Activated CD4-positive, alpha-beta memory T cell treated with anti-CD3 and anti-CD28 coated beads, Interleukin-2, amount 10 ng/mL, durations not matched to agents 7 days and 5 days (primary cell): ENCODE measurements at regions of chr14 and their contacts with region 1.

Region 1: DNA sequence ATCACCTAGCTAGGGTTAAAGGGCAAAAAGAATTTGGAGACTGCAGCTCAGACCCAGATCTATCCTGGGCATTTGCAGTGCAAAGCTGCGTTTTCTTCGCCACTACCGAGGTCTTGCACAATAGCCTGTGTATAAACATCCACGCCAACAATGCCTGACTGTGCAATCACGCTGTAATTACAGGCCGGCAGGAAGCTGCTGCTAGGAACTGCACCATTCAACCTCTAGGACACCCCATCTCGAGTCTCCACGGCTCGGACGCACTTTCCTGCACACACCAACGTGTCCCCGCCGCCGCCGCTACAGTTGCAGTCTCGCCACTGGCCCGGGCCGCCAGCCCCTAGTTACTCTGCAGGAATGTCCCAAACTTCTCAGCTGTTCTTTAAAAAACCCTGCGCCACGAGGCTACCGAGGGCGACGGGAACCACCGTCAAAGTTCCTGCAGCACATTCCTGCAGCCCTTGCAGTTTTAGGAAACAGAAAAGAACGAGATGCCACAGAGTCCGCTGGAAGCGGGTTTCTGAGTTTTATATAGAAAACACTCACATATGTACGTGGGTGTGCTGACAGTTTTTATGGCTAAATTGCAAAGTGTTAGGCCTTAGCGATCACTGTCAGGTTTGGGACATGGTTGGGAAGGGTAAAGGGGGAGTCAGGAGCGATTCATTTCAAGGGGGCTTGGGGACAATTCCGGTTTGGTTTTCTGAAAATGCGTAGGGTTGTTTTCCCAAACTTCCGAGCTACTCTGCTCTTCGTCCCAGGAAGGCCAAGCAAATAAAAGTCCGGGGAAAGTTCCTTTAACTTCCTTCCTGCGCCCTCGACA is 65.5 kb upstream of the PTGR2 start:
- DNase-seq: peak; percentile 78
- H3K4me3 Mint-ChIP-seq: peak overlapping the region; percentile 80
- H3K27ac Mint-ChIP-seq: peak overlapping the region; percentile 94
- H3K4me1 Mint-ChIP-seq: peaks cover 57% of the 10 kb centered on the region
- H3K27me3 Mint-ChIP-seq: no peaks in the 10 kb centered on the region

Region 2: GRCh38 chr14:73568381-73568781 is 217.7 kb before region 1 on chr14:
- CTCF ChIA-PET with region 1: no interaction called
- POLR2A ChIA-PET with region 1: interaction called, 11 read pairs
- DNase-seq: no peak
- H3K4me3 Mint-ChIP-seq: peak overlapping the region; percentile 85
- H3K27ac Mint-ChIP-seq: peak overlapping the region; percentile 91
- H3K4me1 Mint-ChIP-seq: peaks cover 41% of the 10 kb centered on the region
- H3K27me3 Mint-ChIP-seq: no peaks in the 10 kb centered on the region

Region 3: DNA sequence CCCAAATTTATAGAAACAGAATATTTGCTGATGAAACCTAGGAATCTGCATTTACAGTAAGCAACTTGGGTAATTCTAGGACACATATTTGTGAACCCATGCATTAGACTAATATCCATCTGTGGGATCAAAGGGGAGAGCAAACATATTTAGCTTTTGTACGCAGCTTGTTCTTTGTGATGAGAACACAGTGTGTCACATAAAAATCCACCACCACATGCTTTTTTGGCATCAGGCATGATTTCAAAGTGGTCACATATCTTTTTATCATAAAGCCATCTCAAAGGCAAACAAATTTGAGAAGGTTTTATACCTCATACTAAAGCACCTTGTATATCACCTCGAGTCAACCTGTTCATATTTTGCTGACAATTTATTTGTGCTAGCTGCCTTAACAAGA is 125.6 kb before region 1 on chr14:
- CTCF ChIA-PET with region 1: no interaction called
- POLR2A ChIA-PET with region 1: no interaction called
- DNase-seq: no peak
- H3K4me3 Mint-ChIP-seq: no peak overlapping the region
- H3K27ac Mint-ChIP-seq: no peak overlapping the region
- H3K4me1 Mint-ChIP-seq: no peaks in the 10 kb centered on the region
- H3K27me3 Mint-ChIP-seq: no peaks in the 10 kb centered on the region

Region 4: GRCh38 chr14:73695997-73696396 is 90.1 kb before region 1 on chr14:
- CTCF ChIA-PET with region 1: no interaction called
- POLR2A ChIA-PET with region 1: no interaction called
- DNase-seq: no peak
- H3K4me3 Mint-ChIP-seq: no peak overlapping the region
- H3K27ac Mint-ChIP-seq: peak overlapping the region; percentile 69
- H3K4me1 Mint-ChIP-seq: peaks cover 36% of the 10 kb centered on the region
- H3K27me3 Mint-ChIP-seq: no peaks in the 10 kb centered on the region

Region 5: GRCh38 chr14:73728717-73729330 is 57.3 kb before region 1 on chr14:
- CTCF ChIA-PET with region 1: interaction called, 17 read pairs
- POLR2A ChIA-PET with region 1: interaction called, 4 read pairs
- DNase-seq: peak; percentile 88
- H3K4me3 Mint-ChIP-seq: no peak overlapping the region
- H3K27ac Mint-ChIP-seq: peak overlapping the region; percentile 62
- H3K4me1 Mint-ChIP-seq: peaks cover 43% of the 10 kb centered on the region
- H3K27me3 Mint-ChIP-seq: no peaks in the 10 kb centered on the region

Region 6: GRCh38 chr14:73746520-73747378 is 39.3 kb before region 1 on chr14:
- CTCF ChIA-PET with region 1: interaction called, 16 read pairs
- POLR2A ChIA-PET with region 1: interaction called, 79 read pairs
- DNase-seq: no peak
- H3K4me3 Mint-ChIP-seq: no peak overlapping the region
- H3K27ac Mint-ChIP-seq: peak overlapping the region; percentile 75
- H3K4me1 Mint-ChIP-seq: peaks cover 99% of the 10 kb centered on the region
- H3K27me3 Mint-ChIP-seq: no peaks in the 10 kb centered on the region

Region 7: DNA sequence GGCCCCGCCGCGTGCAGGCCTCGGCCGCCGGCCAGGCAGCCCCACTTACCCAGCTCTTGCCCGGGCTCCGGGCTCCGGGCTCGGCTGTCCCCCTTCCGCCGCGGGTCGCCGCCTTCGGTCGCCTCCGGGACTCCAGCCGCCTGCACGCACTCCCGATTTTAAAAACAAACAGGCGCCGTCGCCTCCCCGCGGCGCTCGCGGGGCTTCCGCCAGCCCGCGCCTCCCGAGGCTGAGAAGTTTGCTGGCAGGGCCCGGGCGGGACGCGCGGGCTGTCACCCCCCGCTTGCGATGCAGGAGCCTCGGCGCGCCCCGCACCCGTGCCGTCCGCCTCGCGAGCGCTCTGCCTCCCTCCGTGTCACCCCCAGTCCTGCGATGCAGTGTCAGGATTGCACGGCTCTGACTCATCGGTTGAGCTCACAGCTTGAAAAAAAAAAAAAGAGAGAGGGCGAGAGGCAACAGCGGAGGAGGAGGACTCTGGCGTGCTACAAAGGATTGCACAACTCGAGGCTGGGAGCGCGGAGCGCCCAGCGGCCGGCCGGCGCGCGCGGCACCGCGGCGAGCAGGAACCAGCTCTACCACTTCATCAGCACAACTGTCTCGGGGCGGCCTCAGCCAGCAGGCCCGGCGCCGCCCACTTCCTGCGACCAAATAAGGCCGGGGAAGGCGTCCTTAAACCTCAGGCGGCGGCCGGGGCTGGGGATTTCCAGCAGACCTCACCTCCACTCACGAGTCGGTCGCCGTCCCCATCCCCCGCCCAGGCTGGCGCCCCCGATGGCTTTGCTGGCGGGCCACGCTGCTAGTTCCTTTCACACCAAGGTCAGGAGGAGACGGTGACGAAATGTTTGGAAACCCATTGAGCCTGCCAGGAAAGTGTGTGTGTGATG is 26.1 kb before region 1 on chr14:
- CTCF ChIA-PET with region 1: interaction called, 76 read pairs
- POLR2A ChIA-PET with region 1: interaction called, 236 read pairs
- DNase-seq: peak; percentile 96
- H3K4me3 Mint-ChIP-seq: peak overlapping the region; percentile 87
- H3K27ac Mint-ChIP-seq: peak overlapping the region; percentile 92
- H3K4me1 Mint-ChIP-seq: peaks cover 79% of the 10 kb centered on the region
- H3K27me3 Mint-ChIP-seq: no peaks in the 10 kb centered on the region

Region 8: DNA sequence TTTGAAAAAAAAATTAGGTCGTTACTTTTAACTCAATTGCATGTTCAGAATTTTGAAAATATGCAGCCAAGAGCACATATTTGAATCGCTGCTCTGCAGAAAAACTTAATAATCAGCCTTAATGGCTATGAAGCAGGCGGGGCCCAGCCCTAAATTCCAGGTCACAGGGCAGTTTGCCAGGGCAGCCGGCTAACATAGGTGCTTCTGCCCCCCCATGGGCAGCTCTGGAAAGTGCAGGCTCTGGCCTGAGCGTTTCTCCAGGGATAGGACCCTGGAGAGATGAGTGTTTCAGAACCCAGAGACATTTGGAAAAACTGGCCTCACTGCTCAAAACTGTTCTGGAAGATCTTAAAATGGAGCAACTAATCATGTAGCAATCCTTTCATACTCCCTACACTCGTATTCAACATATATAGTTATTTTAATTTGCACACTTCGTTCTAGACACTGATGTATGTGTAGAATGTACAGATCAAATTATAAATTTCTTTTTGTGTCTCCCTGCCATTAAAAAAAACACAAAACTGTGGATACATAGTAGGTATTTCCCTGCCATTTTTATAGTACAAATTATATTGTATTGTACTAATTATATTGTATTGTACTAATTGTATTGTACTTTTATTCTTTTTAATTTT is 39.6 kb after region 1 on chr14:
- CTCF ChIA-PET with region 1: interaction called, 23 read pairs
- POLR2A ChIA-PET with region 1: interaction called, 24 read pairs
- DNase-seq: peak; percentile 82
- H3K4me3 Mint-ChIP-seq: no peak overlapping the region
- H3K27ac Mint-ChIP-seq: no peak overlapping the region
- H3K4me1 Mint-ChIP-seq: peaks cover 24% of the 10 kb centered on the region
- H3K27me3 Mint-ChIP-seq: peaks cover 5% of the 10 kb centered on the region

Region 9: DNA sequence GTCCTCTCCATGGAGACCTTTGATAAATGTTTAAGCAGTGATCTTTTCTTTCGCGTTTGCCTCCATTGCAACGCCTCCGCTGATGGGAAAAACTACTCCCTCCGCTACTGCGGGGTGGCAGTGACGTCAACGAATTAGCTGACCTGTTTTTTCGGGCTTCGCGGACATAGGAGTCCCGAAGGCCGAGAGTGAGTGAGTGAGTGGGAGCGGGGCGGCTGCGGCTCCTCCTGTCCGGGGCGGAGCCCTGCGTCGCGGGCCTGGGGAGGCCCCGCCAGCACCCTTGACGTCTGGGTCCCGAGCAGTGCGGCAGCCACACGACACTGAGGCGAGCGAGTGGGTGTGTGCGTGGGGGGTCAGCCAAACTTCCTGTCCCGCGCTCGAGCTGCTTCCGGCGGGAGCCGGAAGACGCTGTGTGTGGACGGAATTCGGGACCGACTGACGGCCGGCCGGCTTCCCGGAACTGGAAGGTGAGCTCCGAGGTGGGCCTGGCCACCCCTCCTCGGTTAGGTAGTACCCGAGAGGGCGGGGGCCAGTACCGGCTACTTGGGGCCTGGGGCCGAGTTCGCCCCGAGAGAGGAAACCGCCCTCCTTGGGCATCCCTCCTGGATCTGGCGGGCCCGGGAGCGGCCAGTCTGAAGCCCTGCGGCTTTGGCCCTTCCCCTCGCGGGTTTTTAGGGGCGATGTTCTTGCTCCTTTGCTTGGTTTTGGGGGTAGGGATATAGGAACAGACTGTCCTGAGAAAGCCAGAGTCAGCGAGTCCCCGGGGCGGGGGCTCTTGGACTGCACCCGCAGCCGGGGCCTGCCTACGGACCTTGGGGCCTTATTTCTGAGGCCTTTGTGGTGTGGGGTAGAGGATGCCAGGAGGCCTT is 100.6 kb after region 1 on chr14 and contains the start of gene ZNF410:
- CTCF ChIA-PET with region 1: interaction called, 4 read pairs
- POLR2A ChIA-PET with region 1: interaction called, 35 read pairs
- DNase-seq: peak; percentile 88
- H3K4me3 Mint-ChIP-seq: peak within 1 kb of the TSS; percentile 96
- H3K27ac Mint-ChIP-seq: peak within 1 kb of the TSS; percentile 94
- H3K4me1 Mint-ChIP-seq: peaks cover 51% of the 10 kb centered on the region
- H3K27me3 Mint-ChIP-seq: no peaks in the 10 kb centered on the region
- total RNA-seq, gene ZNF410: 54.2 to 56.5 TPM

Region 10: DNA sequence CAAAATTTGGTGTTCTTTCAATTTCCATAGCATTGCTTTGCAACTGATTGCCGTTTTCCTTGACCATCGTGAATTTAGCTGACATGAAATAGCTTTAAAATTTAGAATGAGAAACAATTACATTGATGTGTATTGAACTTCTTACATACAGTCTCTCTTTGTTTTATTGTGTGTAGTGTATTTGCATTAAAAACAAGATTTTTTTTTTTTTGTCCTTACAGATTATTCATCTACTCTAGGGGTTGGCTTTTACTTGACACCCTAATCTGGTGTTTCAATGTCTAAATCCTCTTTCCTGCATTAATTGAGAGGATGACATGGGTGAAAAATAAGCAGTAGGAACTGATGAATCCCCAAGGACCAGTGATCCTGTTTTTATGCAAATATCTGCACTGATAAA is 319.3 kb after region 1 on chr14:
- CTCF ChIA-PET with region 1: no interaction called
- POLR2A ChIA-PET with region 1: no interaction called
- DNase-seq: no peak
- H3K4me3 Mint-ChIP-seq: no peak overlapping the region
- H3K27ac Mint-ChIP-seq: no peak overlapping the region
- H3K4me1 Mint-ChIP-seq: no peaks in the 10 kb centered on the region
- H3K27me3 Mint-ChIP-seq: no peaks in the 10 kb centered on the region